ENCODE measurements at regions of chr3 and their contacts with region 1.

Region 1: DNA sequence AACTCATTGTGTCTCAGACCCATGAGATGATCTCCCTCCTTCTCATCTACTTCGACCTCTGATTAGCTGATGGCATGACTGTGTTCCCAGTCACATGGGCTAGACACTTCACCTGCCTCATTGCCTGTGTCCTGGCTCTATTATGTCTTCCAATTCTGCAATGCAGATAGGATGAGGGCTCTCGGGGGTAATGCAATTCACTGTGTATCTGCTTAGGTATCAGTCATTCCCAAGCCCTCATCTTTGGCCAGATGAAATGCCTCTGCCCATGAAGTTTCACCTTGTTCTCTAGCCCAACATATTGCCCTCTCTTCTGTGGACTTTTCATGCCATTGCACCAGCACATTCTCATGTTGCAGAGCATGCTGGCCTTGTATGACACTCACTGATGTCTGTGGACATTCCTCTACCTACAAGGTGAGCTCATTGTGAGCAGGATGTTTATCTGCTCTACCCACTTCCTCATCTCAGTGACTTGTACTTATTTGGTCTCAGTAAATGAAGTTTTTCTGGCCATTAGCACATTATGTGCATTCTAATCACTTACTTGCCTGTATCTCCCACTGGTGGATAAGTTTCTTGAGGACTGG is 32.3 kb downstream of the MOBP start:
- DNase-seq: no peak
- ATAC-seq: no peak
- H3K4me3 ChIP-seq: no peak overlapping the region
- H3K27ac ChIP-seq: no peak overlapping the region
- H3K4me1 ChIP-seq: no peaks in the 10 kb centered on the region
- H3K27me3 ChIP-seq: peaks cover 0 to 41% (median 5%) of the 10 kb centered on the region in 3 donors
- CTCF ChIP-seq: no peak

Region 2: GRCh38 chr3:39383045-39383880 is 116.5 kb before region 1 on chr3 and contains the start of gene SLC25A38:
- intact Hi-C with region 1: no loop called
- DNase-seq: peak; percentile 75 to 85
- ATAC-seq: peak; percentile 78 to 83 (median 80)
- H3K4me3 ChIP-seq: peak within 1 kb of the TSS; percentile 84
- H3K27ac ChIP-seq: peak within 1 kb of the TSS; percentile 93
- H3K4me1 ChIP-seq: peaks cover 23% of the 10 kb centered on the region
- H3K27me3 ChIP-seq: no peaks in the 10 kb centered on the region
- CTCF ChIP-seq: peak; percentile 30
- total RNA-seq, gene SLC25A38: 24.9 to 34.8 (median 30.4) TPM

Region 3: DNA sequence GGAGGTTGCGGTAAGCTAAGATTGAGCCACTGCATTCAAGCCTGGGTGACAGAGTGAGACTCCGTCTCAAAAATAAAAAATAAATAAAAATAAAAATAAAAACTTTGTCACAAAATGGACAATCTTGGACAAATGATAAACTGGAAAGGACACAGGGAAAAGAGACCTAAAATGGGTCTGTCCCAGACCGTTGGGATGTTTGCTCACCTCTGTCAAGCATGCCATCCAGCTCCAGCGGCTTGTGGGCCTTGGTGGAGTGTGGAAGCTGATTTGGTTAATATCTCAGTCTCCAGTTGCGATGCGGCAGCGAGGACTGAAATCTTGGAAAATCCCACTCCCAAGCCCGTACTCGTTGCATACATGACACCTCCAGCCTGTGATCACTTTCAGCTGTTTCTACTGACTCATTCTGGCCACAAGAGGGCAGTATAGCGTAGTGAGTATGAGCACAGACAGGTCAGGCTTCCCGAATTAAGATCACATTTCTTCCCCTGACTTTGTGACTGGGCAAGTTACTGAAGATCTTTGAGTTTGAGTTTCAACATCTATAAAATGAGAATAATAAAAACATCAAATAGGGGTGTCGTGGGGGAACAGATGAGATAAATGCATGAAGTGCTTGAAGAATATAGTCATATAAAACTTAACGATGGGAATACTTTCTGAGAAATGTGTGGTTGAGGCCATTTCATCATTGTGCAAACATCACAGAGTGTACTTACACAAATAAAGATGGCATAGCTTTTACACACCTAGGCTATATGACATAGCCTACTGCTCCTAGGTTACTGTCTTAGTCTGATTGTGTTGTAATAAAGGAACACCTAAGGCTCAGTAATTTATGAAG is 51.9 kb before region 1 on chr3:
- intact Hi-C with region 1: loop called (anchors 2 kb)
- DNase-seq: no peak
- ATAC-seq: peak; percentile 92 to 97 (median 93)
- H3K4me3 ChIP-seq: no peak overlapping the region
- H3K27ac ChIP-seq: no peak overlapping the region
- H3K4me1 ChIP-seq: no peaks in the 10 kb centered on the region
- H3K27me3 ChIP-seq: no peaks in the 10 kb centered on the region
- CTCF ChIP-seq: peak; percentile 89

Region 4: DNA sequence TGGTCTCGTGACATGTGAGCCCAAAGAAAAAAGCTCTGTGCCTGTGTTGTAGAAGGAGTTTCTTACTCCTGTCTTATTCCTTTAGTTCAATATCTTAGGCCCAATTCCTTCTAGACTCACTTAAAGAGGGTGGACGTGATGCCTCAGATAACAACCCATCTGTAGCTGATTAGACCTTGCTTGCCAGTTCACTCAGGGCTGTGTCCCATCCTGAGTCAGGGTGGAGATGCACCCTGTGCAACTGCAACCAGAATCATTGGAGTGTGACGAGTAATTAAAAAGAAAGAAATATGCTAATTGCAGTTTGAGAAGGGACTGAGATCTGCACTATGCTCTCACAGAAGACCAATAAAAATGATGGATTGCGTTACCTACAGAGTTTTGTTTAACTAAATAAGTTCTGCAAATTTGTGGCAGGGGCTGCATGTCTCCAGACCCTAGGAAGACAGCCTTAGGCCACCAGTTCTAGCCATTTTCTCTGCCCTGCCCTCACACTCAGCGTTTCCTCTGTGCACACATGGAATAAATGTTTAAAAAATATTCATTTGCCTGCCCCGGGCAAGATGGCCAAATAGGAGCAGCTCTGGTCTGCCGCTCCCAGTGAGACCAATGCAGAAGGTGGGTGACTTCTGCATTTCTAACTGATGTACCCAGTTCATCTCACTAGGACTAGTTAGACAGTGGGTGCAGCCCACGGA is 50.8 kb after region 1 on chr3:
- intact Hi-C with region 1: no loop called
- DNase-seq: no peak
- ATAC-seq: no peak
- H3K4me3 ChIP-seq: no peak overlapping the region
- H3K27ac ChIP-seq: no peak overlapping the region
- H3K4me1 ChIP-seq: no peaks in the 10 kb centered on the region
- H3K27me3 ChIP-seq: no peaks in the 10 kb centered on the region
- CTCF ChIP-seq: no peak